WTC11 (cell line): ENCODE measurements at regions of chr1 and their contacts with region 1.

Region 1: DNA sequence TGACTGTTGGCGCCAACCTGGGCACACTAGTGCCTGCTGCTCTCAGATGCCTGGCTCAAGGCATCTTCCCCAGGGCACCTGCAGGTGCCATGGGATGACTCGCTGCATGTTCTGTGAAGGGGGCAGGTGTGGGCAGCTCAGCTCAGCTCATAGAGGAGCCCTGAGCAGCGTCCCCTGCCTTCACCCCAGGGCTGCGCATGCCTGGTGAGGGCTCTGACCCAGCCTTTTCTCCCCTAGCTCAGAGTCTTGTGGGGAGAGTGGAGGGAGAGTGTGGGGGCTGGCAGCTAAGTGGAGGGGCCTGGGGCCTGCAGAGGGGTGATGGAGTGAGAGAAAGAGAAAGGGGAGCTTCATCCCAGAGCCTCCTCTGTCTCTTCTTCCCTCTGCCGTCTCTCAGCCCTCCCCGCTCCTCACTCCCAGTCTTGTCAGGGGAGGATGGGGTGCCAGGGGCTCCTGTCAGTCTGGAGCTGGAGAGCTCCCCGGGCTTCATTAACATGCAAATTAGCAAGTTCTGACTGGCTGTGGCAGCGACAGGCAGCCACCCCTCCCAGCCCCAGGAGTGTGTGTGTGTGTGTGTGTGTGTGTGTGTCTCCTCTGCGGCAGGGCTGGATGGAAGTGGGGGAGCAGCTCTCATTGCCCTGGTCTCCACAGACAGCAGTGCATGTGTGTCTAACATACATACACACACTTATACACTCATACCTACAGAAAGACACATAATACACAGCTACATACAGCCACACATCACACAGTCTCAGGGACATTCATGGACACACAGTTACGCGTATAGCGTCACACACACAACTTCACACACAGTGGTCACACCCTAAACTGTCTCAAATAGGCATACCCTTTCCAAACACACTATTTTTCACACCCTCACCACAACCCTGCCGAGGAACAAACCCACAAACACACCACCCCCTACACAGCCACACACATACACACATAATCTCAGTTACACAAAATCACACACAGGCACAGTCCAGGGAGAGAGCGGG is 34.0 kb downstream of the FOXO6 start:
- DNase-seq: peak; percentile 78
- ATAC-seq: peak; percentile 89
- H3K4me3 Mint-ChIP-seq: peak overlapping the region; percentile 49
- H3K27ac Mint-ChIP-seq: no peak overlapping the region
- H3K4me1 Mint-ChIP-seq: peaks cover 59% of the 10 kb centered on the region
- H3K27me3 Mint-ChIP-seq: peaks cover 6% of the 10 kb centered on the region
- CTCF ChIP-seq: no peak

Region 2: GRCh38 chr1:41135196-41135947 is 259.9 kb before region 1 on chr1:
- CTCF ChIA-PET with region 1: no interaction called
- POLR2A ChIA-PET with region 1: no interaction called
- DNase-seq: no peak
- ATAC-seq: no peak
- H3K4me3 Mint-ChIP-seq: no peak overlapping the region
- H3K27ac Mint-ChIP-seq: no peak overlapping the region
- H3K4me1 Mint-ChIP-seq: peaks cover 6% of the 10 kb centered on the region
- H3K27me3 Mint-ChIP-seq: no peaks in the 10 kb centered on the region; the same call in 1 of the 2 replicates
- CTCF ChIP-seq: no peak

Region 3: DNA sequence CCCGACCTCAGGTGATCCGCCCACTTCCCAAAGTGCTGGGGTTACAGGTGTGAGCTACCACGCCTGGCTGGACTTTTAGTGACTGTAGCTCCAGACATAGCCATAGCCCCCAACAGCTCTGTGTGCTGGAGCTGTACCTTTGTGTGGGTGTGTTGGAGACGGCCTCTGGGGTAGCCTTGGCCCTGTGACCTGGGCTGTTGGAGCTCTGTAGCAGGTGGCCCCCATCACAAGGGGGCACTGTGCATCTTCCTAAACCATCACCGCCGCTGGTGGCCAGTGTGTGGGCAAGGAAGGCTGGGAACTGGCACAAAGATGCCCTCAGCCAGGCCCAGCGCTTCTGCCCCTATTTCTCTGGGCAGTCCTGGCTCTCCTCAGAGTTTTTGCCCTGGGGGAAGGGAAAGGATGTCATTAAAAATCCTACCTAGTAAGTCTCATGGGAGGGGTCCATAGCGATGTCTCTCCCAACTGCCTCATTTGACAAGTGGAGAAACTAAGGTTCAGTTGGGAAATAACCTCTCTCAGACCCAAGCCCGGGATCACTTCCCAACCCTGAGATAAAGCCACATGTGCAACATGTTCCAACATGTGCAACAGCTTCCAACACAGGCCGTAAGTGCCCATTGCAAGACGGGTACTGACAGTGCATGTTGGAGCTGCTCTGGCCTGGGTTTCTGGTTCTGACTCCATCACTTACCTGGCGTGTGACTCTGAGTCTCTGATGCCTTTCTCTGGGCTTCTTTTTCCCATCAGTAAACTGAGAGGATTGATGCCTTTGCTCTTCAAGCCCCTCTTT is 72.2 kb before region 1 on chr1:
- CTCF ChIA-PET with region 1: interaction called, 11 read pairs
- POLR2A ChIA-PET with region 1: interaction called, 3 read pairs
- DNase-seq: peak; percentile 75
- ATAC-seq: peak; percentile 95
- H3K4me3 Mint-ChIP-seq: no peak overlapping the region
- H3K27ac Mint-ChIP-seq: no peak overlapping the region
- H3K4me1 Mint-ChIP-seq: peaks cover 11% of the 10 kb centered on the region
- H3K27me3 Mint-ChIP-seq: no peaks in the 10 kb centered on the region
- CTCF ChIP-seq: peak; percentile 49

Region 4: GRCh38 chr1:41341772-41342562 is 53.3 kb before region 1 on chr1:
- CTCF ChIA-PET with region 1: interaction called, 14 read pairs
- POLR2A ChIA-PET with region 1: interaction called, 3 read pairs
- DNase-seq: no peak
- ATAC-seq: peak; percentile 40; the same call in 1 of the 2 replicates
- H3K4me3 Mint-ChIP-seq: no peak overlapping the region
- H3K27ac Mint-ChIP-seq: no peak overlapping the region
- H3K4me1 Mint-ChIP-seq: peaks cover 6% of the 10 kb centered on the region
- H3K27me3 Mint-ChIP-seq: peaks cover 12% of the 10 kb centered on the region
- CTCF ChIP-seq: no peak

Region 5: DNA sequence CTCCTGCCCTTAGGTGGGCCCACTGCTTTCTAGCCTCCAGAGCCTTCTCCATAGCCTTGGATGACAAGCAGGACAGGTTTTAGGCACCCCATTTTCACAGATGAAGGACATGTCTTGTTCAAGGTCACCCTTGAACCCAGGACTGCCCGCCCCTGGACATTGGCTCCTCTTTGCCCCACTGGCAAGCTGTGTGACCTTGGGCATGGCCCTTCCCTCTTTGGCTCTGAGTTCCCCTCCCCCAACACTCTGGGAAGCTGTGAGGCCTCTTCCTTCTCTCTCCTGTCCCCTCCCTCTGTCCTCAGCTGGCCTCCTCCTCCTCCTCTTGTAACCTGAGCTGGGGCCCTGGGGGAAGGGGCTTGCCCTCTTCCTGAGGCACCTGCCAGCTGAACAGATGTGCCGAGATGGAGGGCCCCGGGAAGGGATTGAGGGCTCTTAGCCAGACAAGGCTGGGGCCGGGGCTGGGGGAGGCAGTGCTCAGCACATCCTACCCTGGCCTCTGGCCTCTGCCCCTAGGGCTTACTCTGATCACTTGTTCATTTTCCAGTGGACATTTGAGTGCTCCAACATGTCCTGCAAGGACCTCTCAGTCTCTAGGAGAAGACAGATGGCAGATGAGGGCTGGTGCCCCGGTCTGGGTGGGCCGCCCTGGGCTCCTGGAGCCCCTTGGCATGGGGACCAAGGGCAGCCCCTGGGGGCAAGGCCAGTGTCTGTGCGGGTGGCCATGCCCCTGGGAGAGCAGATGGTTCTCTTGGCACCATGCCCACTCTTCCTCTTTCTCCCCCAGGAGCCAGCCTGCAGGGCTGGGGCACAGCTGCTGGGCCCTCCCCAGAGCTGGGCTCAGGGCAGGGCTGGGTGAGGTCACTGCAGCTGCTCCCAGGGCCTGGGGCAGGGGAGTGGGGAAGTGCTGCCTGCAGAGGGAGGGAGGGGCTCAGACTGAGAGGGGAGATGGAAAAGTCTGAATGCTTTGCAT is 23.3 kb before region 1 on chr1:
- CTCF ChIA-PET with region 1: interaction called, 32 read pairs
- POLR2A ChIA-PET with region 1: no interaction called
- DNase-seq: peak; percentile 87
- ATAC-seq: peak; percentile 91
- H3K4me3 Mint-ChIP-seq: peak overlapping the region; percentile 62
- H3K27ac Mint-ChIP-seq: peak overlapping the region; percentile 85; the same call in 1 of the 2 replicates
- H3K4me1 Mint-ChIP-seq: peaks cover 68% of the 10 kb centered on the region
- H3K27me3 Mint-ChIP-seq: peaks cover 31% of the 10 kb centered on the region
- CTCF ChIP-seq: no peak

Region 6: GRCh38 chr1:41409825-41410224 is 14.6 kb after region 1 on chr1:
- CTCF ChIA-PET with region 1: interaction called, 46 read pairs
- POLR2A ChIA-PET with region 1: interaction called, 3 read pairs
- DNase-seq: no peak
- ATAC-seq: no peak
- H3K4me3 Mint-ChIP-seq: no peak overlapping the region
- H3K27ac Mint-ChIP-seq: no peak overlapping the region
- H3K4me1 Mint-ChIP-seq: peaks cover 38% of the 10 kb centered on the region
- H3K27me3 Mint-ChIP-seq: peaks cover 9% of the 10 kb centered on the region; the same call in 1 of the 2 replicates
- CTCF ChIP-seq: no peak

Region 7: DNA sequence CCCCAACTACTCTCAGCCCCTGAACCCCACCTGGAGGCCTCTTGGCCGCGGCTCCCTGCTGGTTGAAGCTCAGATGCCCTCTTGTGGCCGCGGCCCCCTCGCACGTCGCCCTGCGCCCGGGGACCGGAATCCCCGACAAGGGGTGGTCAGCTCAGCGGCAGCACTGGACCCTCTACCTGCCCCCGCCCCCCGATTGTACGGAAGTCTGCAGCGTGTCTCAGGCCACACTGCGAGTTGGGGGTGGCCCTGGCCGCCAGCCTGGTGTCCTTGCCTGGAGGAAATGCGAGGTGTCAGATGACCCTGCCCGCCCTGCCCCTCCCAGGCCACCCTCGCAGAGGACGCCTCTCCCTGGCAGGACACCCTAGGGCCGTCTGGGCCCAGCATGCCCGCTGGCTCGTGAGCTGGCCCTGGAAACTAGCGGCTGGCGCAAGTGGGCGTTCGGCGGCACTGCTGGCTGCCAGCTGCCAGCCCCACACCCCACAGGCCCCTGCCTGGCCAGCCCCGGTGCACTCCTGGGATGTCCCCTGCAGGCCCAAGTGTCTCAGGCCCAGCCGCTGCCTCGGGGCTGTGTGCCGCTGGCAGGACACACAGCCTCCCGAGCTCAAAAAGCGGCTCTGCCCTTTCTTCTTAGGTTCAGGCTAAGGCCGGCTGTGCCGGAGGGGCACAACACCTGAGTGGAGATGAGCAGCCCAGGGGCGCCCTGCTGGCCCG is 28.4 kb after region 1 on chr1:
- CTCF ChIA-PET with region 1: interaction called, 46 read pairs
- POLR2A ChIA-PET with region 1: no interaction called
- DNase-seq: peak; percentile 66
- ATAC-seq: peak; percentile 52
- H3K4me3 Mint-ChIP-seq: no peak overlapping the region
- H3K27ac Mint-ChIP-seq: no peak overlapping the region
- H3K4me1 Mint-ChIP-seq: peaks cover 5% of the 10 kb centered on the region
- H3K27me3 Mint-ChIP-seq: no peaks in the 10 kb centered on the region
- CTCF ChIP-seq: no peak

Region 8: GRCh38 chr1:41461790-41462611 is 66.7 kb after region 1 on chr1:
- CTCF ChIA-PET with region 1: no interaction called
- POLR2A ChIA-PET with region 1: no interaction called
- DNase-seq: no peak
- ATAC-seq: no peak
- H3K4me3 Mint-ChIP-seq: no peak overlapping the region
- H3K27ac Mint-ChIP-seq: no peak overlapping the region
- H3K4me1 Mint-ChIP-seq: no peaks in the 10 kb centered on the region
- H3K27me3 Mint-ChIP-seq: no peaks in the 10 kb centered on the region
- CTCF ChIP-seq: no peak